Sigmoid colon (tissue), 7 donors: ENCODE measurements at regions of chr2 and their contacts with region 1.

Region 1: DNA sequence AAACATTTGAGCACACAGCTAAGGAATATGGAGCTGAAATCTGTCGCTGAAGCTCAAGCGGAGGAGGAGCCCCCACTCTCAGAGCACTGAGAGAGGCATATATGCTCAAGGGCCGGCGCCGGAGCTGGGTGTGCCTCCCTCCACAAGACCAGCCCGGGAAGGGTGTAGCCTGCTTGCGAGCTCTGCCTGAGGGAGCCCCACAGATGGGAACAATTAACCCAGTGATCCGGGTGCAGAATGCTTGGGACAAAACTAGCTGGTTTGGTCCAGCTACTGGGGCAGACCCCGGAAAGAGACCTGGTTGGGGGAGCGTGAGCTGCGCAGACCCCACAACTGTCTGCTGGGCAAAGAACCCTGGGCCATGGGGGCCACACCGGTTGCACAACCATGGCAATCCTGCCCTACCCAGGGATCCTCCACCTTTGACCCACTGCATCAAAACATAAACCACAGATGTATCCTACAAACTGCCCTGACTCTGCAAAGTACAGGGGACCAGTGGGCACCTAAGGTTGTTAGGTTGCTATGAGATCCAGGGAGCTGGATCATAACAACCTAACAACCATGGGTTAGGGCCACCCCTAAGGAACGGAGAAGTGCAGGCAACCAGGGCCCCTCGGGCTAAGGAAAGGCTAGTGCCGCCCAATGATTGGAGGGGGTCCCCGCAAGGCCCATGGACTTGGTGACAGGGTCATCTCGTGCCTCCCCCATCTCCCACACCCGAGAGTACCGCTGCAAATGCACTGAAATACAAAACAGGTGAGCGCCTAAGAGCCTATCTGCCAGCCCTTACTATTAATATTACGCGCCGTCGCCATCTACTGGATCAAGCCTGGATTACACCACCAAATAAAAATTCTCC is 53.4 kb upstream of the SCN1A start:
- DNase-seq: no peak
- H3K4me3 ChIP-seq: no peak overlapping the region
- H3K27ac ChIP-seq: no peak overlapping the region
- H3K4me1 ChIP-seq: peaks cover 0 to 29% (median 0%) of the 10 kb centered on the region in 4 donors
- H3K27me3 ChIP-seq: no peaks in the 10 kb centered on the region
- CTCF ChIP-seq: peak in 2 of 4 experiments; percentile 21 to 49
- EP300 ChIP-seq: no peak
- POLR2A ChIP-seq: no peak

Region 2: GRCh38 chr2:166246901-166247300 is 65.7 kb after region 1 on chr2:
- intact Hi-C with region 1: loop called (anchors 2 kb)
- DNase-seq: no peak
- H3K4me3 ChIP-seq: no peak overlapping the region
- H3K27ac ChIP-seq: no peak overlapping the region
- H3K4me1 ChIP-seq: no peaks in the 10 kb centered on the region
- H3K27me3 ChIP-seq: no peaks in the 10 kb centered on the region
- CTCF ChIP-seq: no peak
- EP300 ChIP-seq: no peak
- POLR2A ChIP-seq: no peak